B cell (primary cell): ENCODE measurements at regions of chr5 and their contacts with region 1.

Region 1: GRCh38 chr5:77076961-77077823 is 9.9 kb downstream of the ZBED3 start:
- DNase-seq: peak; percentile 65
- ATAC-seq: peak; percentile 76
- H3K4me3 ChIP-seq: peak overlapping the region in 4 of 5 experiments; percentile 11 to 43 (median 36)
- H3K4me3 Mint-ChIP-seq: peak overlapping the region; percentile 69
- H3K27ac ChIP-seq: no peak overlapping the region
- H3K27ac Mint-ChIP-seq: no peak overlapping the region
- H3K4me1 ChIP-seq: peaks cover 5 to 6% of the 10 kb centered on the region in 2 donors
- H3K4me1 Mint-ChIP-seq: peaks cover 14% of the 10 kb centered on the region
- H3K27me3 ChIP-seq: no peaks in the 10 kb centered on the region
- H3K27me3 Mint-ChIP-seq: peaks cover 5% of the 10 kb centered on the region
- CTCF ChIP-seq: peak; percentile 71

Region 2: GRCh38 chr5:76601470-76601869 is 475.7 kb before region 1 on chr5:
- CTCF ChIA-PET with region 1: interaction called, 3 read pairs
- POLR2A ChIA-PET with region 1: no interaction called
- intact Hi-C with region 1: loop called (anchors 5 kb)
- DNase-seq: peak; percentile 67
- ATAC-seq: peak; percentile 47
- H3K4me3 ChIP-seq: no peak overlapping the region
- H3K4me3 Mint-ChIP-seq: no peak overlapping the region
- H3K27ac ChIP-seq: no peak overlapping the region
- H3K27ac Mint-ChIP-seq: no peak overlapping the region
- H3K4me1 ChIP-seq: no peaks in the 10 kb centered on the region
- H3K4me1 Mint-ChIP-seq: no peaks in the 10 kb centered on the region
- H3K27me3 ChIP-seq: no peaks in the 10 kb centered on the region
- H3K27me3 Mint-ChIP-seq: no peaks in the 10 kb centered on the region
- CTCF ChIP-seq: peak; percentile 78

Region 3: DNA sequence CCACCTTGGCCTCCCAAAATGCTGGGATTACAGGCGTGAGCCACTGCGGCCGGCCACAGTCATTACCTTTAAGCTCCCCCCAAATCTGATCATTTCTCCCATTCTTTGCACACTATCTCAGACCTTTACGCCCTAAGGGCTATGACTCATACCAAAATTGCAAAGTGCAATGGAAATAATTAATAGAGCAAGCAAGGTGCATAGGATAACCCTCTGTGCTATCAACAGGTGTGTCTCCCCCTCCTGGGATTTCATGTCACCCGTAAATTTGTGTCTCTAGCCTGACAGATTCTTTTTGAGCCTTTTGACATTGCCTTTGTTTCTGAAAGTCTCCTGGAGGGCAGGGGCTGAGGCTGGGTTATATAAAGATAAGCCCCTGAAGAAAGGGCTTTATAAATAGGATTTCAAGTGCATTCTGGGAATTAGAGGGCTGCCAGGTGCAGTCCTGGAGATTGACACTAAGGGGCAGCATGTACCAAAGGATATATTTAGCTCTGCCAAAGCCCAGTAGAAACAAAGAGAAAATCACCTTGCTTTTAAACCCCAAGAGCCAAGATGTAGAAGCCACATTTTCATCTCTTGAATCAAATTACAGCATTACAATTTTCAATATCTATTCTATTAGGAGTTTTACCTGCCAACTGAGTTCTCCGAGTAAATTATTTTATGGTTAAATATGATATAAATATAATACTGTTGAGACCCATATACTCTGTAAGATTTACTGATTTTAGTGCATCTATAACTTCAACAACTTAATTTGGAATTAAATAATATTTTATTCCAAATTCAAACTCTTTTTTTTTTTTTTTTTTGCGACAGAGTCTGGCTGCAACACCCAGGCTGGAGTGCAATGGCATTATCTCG is 209.1 kb before region 1 on chr5:
- CTCF ChIA-PET with region 1: interaction called, 15 read pairs
- POLR2A ChIA-PET with region 1: no interaction called
- intact Hi-C with region 1: loop called (anchors 1 kb)
- DNase-seq: peak; percentile 70
- ATAC-seq: peak; percentile 74
- H3K4me3 ChIP-seq: no peak overlapping the region
- H3K4me3 Mint-ChIP-seq: no peak overlapping the region
- H3K27ac ChIP-seq: no peak overlapping the region
- H3K27ac Mint-ChIP-seq: no peak overlapping the region
- H3K4me1 ChIP-seq: peaks cover 0 to 2% of the 10 kb centered on the region in 2 donors
- H3K4me1 Mint-ChIP-seq: no peaks in the 10 kb centered on the region
- H3K27me3 ChIP-seq: no peaks in the 10 kb centered on the region
- H3K27me3 Mint-ChIP-seq: no peaks in the 10 kb centered on the region
- CTCF ChIP-seq: peak; percentile 71

Region 4: DNA sequence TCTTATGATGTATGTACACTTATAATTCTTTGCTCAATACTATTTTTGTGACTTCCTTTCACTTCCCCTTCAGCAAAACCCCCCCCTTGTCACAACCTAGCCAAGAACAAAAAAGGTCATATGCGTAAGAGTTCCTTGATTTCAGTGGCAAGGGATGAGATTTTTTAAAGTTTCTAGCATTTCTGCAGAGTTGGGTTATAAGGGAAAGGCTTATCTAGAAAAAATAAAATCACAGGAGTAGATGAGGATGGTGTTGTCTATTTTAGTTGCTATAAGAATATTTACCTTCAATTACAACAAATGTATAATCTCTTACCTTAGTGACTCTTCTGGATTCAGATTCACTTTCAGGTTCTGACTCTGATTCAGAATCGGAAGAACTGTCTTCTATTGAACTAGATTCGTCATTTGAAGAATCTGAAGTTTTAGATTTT is 1032.7 kb after region 1 on chr5:
- CTCF ChIA-PET with region 1: no interaction called
- POLR2A ChIA-PET with region 1: interaction called, 10 read pairs
- intact Hi-C with region 1: no loop called
- DNase-seq: peak; percentile 80
- ATAC-seq: peak; percentile 71
- H3K4me3 ChIP-seq: peak overlapping the region in 4 of 5 experiments; percentile 4 to 51 (median 30)
- H3K4me3 Mint-ChIP-seq: peak overlapping the region; percentile 64
- H3K27ac ChIP-seq: peak overlapping the region; percentile 69 to 83
- H3K27ac Mint-ChIP-seq: peak overlapping the region; percentile 73
- H3K4me1 ChIP-seq: peaks cover 56 to 67% of the 10 kb centered on the region in 2 donors
- H3K4me1 Mint-ChIP-seq: peaks cover 58% of the 10 kb centered on the region
- H3K27me3 ChIP-seq: no peaks in the 10 kb centered on the region
- H3K27me3 Mint-ChIP-seq: no peaks in the 10 kb centered on the region
- CTCF ChIP-seq: no peak